IMR-90 (cell line): ENCODE measurements at regions of chr4 and their contacts with region 1.

Region 1: DNA sequence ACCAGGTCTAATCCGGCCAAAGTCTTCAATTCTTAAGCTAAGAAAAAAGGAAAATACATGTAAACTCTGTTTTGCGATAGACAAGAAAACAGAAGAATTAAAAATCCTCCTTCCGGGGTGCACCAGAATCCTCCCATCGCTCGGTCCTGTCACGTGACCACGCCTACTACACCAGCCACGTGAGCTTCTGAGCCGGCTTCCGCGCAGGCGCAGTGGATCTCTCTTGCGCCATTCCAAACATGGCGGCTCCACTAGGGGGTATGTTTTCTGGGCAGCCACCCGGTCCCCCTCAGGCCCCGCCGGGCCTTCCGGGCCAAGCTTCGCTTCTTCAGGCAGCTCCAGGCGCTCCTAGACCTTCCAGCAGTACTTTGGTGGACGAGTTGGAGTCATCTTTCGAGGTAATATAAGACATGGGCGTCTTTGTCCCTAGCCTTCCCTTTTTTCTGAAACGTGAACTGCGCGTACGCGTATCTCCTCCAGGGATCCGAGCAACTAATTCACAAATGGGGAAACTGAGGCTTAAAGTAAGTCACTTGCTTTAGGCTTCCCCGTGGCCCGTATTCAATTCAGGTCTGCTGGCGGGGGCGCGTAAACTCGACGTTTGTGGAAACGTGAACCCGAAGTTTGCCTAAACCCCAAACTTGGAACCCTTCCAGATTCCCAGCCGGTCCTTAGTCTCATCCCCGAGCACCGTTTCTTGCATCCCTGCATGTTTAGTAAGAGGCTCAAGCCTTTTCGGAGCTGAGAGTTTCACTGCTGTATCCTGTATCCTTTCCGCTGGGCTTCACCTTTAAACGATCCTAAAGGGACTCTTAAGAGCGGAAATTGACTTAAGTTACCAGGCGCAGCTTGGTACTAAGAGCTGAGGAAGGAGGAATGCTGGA is at the start of gene MED28:
- DNase-seq: peak; percentile 95
- ATAC-seq: peak; percentile 87
- H3K4me3 ChIP-seq: peak within 1 kb of the TSS; percentile 75
- H3K27ac ChIP-seq: peak within 1 kb of the TSS; percentile 91
- H3K4me1 ChIP-seq: peaks cover 11% of the 10 kb centered on the region
- H3K27me3 ChIP-seq: no peaks in the 10 kb centered on the region
- CTCF ChIP-seq: 0 out of 2 replicates have a peak, but pooled peaks have one; percentile 5
- POLR2A ChIP-seq: peak; percentile 88
- RAD21 ChIP-seq: no peak
- total RNA-seq, gene MED28: 7.2 and 9.3 TPM in 2 replicates

Region 2: GRCh38 chr4:16582532-16582931 is 1032.1 kb before region 1 on chr4:
- CTCF ChIA-PET with region 1: no interaction called
- POLR2A ChIA-PET with region 1: no interaction called
- dilution Hi-C with region 1: no loop called
- in situ Hi-C with region 1: no loop called
- intact Hi-C with region 1: no loop called
- DNase-seq: no peak
- ATAC-seq: no peak
- H3K4me3 ChIP-seq: no peak overlapping the region
- H3K27ac ChIP-seq: no peak overlapping the region
- H3K4me1 ChIP-seq: peaks cover 10% of the 10 kb centered on the region
- H3K27me3 ChIP-seq: no peaks in the 10 kb centered on the region
- CTCF ChIP-seq: no peak
- POLR2A ChIP-seq: no peak
- RAD21 ChIP-seq: no peak

Region 3: DNA sequence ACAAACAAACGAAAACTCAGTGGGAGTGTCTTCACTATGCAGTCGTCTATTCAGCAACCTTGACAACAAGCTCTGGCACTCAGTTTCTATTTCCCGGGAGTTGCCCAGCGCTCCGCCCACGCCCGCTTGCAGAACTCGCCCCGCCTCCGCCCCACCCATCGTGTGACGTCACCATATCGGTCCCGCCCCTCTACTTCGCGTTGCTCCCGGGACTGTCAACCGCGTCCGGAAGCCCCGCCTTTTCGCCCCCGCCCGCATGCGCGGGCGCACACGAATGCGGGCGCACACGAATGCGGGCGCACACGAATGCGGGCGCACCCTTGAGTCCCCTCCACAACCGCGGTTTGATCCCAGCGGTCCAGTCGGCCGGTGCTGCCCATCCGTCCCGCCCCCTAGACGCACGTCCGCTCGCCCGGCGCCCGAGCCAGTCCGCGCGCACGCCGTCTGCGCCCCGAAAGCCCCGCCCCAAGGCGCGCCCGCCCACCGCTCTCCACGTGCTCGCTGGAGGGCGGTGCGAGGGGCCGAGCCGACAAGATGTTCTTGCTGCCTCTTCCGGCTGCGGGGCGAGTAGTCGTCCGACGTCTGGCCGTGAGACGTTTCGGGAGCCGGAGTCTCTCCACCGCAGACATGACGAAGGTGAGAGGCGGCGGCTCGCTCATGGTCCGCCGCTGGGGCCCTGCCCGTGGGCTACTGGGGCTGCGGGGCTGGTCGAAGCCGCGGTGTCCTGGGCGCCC is 37.6 kb before region 1 on chr4 and contains the start of gene LAP3:
- CTCF ChIA-PET with region 1: no interaction called
- POLR2A ChIA-PET with region 1: interaction called, 4 read pairs
- dilution Hi-C with region 1: no loop called
- in situ Hi-C with region 1: loop called (anchors 5 kb)
- intact Hi-C with region 1: loop called (anchors 2 kb)
- DNase-seq: peak; percentile 96
- ATAC-seq: peak; percentile 97
- H3K4me3 ChIP-seq: peak within 1 kb of the TSS; percentile 65
- H3K27ac ChIP-seq: peak within 1 kb of the TSS; percentile 62
- H3K4me1 ChIP-seq: peaks cover 6% of the 10 kb centered on the region; the same call in 1 of the 2 replicates
- H3K27me3 ChIP-seq: no peaks in the 10 kb centered on the region
- CTCF ChIP-seq: 0 out of 2 replicates have a peak, but pooled peaks have one; percentile 1
- POLR2A ChIP-seq: peak; percentile 95
- RAD21 ChIP-seq: no peak
- total RNA-seq, gene LAP3: 91.6 and 93.0 TPM in 2 replicates

Region 4: DNA sequence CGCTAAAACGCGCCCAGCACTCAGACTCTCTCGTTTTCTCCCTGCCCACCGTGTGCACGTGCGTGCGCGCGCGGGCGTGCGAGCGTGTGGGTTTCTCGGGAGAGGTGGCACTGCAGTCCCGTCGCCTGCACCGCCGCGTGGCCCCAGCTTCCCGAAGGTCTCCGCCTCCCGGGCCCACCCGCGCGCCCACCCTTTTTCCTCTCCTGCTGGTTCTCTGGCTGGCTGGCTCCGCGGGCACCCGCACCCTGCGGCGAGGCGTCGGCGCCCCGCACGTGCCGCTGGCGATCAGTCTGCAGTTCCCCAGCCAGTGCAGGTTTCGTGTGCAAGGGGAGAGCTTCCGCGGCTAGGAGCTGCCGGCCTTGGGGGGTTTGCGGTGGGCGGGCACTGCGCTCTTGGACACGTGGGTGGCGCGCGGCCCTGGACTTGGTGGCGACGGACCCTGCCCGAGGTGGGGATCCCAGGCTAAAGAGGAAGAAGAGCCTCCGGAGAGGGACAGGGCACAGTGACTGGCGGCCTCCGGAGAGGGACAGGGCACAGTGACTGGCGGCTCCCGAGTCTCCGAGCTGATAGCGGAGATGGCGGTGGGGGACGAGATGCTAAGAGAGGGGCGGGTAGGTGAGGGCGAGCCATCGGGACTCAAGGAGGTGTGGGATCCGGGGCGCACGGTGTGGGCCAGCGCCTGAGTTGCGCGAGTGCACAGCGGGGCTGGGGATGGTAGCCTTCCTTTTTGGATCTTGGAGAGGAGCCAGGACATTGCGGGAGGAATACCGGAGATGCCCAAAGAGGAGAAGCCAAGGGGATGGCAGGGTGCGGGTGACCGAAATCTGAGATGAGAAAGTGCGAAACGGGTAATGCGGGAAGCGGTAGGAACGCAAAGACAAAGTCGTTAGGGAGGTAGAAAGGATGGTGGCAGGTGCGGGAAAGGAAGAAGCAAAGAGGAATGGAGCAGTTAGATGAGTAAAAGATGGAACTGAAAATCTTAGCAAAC is 166.9 kb after region 1 on chr4 and contains the start of gene FAM184B:
- CTCF ChIA-PET with region 1: no interaction called
- POLR2A ChIA-PET with region 1: no interaction called
- dilution Hi-C with region 1: no loop called
- in situ Hi-C with region 1: no loop called
- intact Hi-C with region 1: no loop called
- DNase-seq: no peak
- ATAC-seq: peak; percentile 59
- H3K4me3 ChIP-seq: peak within 1 kb of the TSS; percentile 18
- H3K27ac ChIP-seq: no peak within 1 kb of the TSS
- H3K4me1 ChIP-seq: peaks cover 5% of the 10 kb centered on the region; the same call in 1 of the 2 replicates
- H3K27me3 ChIP-seq: peaks cover 24% of the 10 kb centered on the region
- CTCF ChIP-seq: no peak
- POLR2A ChIP-seq: no peak
- RAD21 ChIP-seq: no peak
- total RNA-seq, gene FAM184B: 0.18 and 0.28 TPM in 2 replicates